Panc1 (cell line): ENCODE measurements at regions of chr10 and their contacts with region 1.

Region 1: GRCh38 chr10:101006593-101007098 is 7.0 kb downstream of the LZTS2 start:
- DNase-seq: no peak
- ATAC-seq: no peak
- H3K4me3 ChIP-seq: no peak overlapping the region
- H3K27ac ChIP-seq: no peak overlapping the region
- H3K4me1 ChIP-seq: peaks cover 10% of the 10 kb centered on the region
- H3K27me3 ChIP-seq: no peaks in the 10 kb centered on the region
- CTCF ChIP-seq: no peak

Region 2: DNA sequence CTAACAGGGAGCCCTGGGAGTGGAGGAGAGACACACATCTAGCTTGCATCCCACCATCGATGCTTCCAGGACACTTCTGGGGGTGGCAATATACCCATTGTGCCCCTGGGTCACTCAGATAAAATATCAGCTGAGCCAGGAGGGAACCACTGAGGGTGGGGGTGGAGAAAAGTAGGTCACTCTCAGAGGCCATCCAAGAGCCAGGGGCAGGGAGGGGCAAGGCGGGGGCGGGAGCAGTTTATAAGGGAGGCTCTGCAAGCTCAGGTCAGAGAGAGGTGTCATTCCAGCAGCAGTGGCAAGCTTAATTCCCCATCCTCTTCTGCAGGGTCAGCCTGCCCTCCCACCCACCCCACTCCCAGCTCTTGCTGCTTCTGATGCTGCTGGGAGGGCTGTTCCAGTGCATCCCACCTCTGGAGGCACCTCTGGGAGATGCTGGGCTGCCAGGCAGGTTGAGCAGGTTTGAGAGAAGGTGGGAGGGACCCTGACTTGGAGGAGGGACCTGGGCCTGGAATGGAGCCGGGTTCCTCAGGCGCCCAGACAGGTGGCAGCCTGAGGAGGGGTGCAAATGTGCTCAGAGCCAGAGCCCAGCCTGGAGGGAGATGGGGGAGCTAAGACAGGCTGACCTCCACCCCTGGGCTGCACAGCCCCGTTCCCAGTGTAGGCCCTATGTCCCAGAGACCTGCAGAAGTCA is 104.4 kb after region 1 on chr10:
- CTCF ChIA-PET with region 1: no interaction called
- POLR2A ChIA-PET with region 1: no interaction called
- in situ Hi-C with region 1: no loop called
- intact Hi-C with region 1: no loop called
- DNase-seq: no peak
- ATAC-seq: peak; percentile 18; the same call in 1 of the 2 replicates
- H3K4me3 ChIP-seq: no peak overlapping the region
- H3K27ac ChIP-seq: no peak overlapping the region
- H3K4me1 ChIP-seq: peaks cover 5% of the 10 kb centered on the region; the same call in 1 of the 2 replicates
- H3K27me3 ChIP-seq: no peaks in the 10 kb centered on the region
- CTCF ChIP-seq: no peak

Region 3: GRCh38 chr10:101545898-101546297 is 539.3 kb after region 1 on chr10:
- CTCF ChIA-PET with region 1: no interaction called
- POLR2A ChIA-PET with region 1: interaction called, 14 read pairs
- in situ Hi-C with region 1: no loop called
- intact Hi-C with region 1: no loop called
- DNase-seq: no peak
- ATAC-seq: no peak
- H3K4me3 ChIP-seq: no peak overlapping the region
- H3K27ac ChIP-seq: no peak overlapping the region
- H3K4me1 ChIP-seq: no peaks in the 10 kb centered on the region
- H3K27me3 ChIP-seq: no peaks in the 10 kb centered on the region
- CTCF ChIP-seq: no peak